Activated T-helper 1 cell treated with anti-CD3 and anti-CD28 coated beads, Interleukin-12 subunit alpha, Interleukin-12 subunit beta, Interleukin-2, Interleukin-4 antibody, amounts not matched to agents 30 ng/mL and 10 ng/mL and 1 ng/mL, durations not matched to agents 14 hours and 24 hours and 36 hours (primary cell): ENCODE measurements at regions of chr2 and their contacts with region 1.

Region 1: DNA sequence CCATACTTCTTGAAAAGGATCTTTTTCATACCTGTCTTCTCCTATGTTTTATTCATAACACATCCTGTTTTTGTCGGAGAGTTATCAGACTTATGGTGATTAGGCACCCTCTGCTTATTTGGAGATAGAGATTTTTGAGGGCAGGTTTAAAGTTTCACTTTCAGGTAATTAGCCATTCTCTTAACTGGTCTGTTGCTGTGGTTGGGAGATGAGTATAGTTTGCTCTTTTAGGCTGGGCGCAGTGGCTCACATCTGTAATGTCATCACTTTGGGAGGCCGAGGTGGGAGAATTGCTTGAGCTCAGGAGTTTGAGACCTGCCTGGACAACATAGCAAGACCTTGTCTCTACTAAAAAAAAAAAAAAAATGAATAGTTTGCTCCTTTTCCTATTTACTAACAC is 25.3 kb downstream of the SFTPB start:
- DNase-seq: no peak
- H3K4me3 Mint-ChIP-seq: no peak overlapping the region
- H3K27ac Mint-ChIP-seq: no peak overlapping the region
- H3K4me1 Mint-ChIP-seq: peaks cover 22% of the 10 kb centered on the region
- H3K27me3 Mint-ChIP-seq: no peaks in the 10 kb centered on the region

Region 2: GRCh38 chr2:85611705-85612587 is 30.8 kb before region 1 on chr2 and contains the start of gene C2orf68:
- intact Hi-C with region 1: loop called (anchors 1 kb)
- DNase-seq: peak; percentile 86
- H3K4me3 Mint-ChIP-seq: peak within 1 kb of the TSS; percentile 98
- H3K27ac Mint-ChIP-seq: peak within 1 kb of the TSS; percentile 89
- H3K4me1 Mint-ChIP-seq: peaks cover 12% of the 10 kb centered on the region
- H3K27me3 Mint-ChIP-seq: no peaks in the 10 kb centered on the region
- total RNA-seq, gene C2orf68: 36.3 and 36.7 TPM in 2 replicates

Region 3: GRCh38 chr2:85707304-85707703 is 64.6 kb after region 1 on chr2:
- intact Hi-C with region 1: loop called (anchors 1 kb)
- DNase-seq: peak; percentile 76
- H3K4me3 Mint-ChIP-seq: peak overlapping the region; percentile 50
- H3K27ac Mint-ChIP-seq: peak overlapping the region; percentile 94
- H3K4me1 Mint-ChIP-seq: peaks cover 79% of the 10 kb centered on the region
- H3K27me3 Mint-ChIP-seq: no peaks in the 10 kb centered on the region

Region 4: DNA sequence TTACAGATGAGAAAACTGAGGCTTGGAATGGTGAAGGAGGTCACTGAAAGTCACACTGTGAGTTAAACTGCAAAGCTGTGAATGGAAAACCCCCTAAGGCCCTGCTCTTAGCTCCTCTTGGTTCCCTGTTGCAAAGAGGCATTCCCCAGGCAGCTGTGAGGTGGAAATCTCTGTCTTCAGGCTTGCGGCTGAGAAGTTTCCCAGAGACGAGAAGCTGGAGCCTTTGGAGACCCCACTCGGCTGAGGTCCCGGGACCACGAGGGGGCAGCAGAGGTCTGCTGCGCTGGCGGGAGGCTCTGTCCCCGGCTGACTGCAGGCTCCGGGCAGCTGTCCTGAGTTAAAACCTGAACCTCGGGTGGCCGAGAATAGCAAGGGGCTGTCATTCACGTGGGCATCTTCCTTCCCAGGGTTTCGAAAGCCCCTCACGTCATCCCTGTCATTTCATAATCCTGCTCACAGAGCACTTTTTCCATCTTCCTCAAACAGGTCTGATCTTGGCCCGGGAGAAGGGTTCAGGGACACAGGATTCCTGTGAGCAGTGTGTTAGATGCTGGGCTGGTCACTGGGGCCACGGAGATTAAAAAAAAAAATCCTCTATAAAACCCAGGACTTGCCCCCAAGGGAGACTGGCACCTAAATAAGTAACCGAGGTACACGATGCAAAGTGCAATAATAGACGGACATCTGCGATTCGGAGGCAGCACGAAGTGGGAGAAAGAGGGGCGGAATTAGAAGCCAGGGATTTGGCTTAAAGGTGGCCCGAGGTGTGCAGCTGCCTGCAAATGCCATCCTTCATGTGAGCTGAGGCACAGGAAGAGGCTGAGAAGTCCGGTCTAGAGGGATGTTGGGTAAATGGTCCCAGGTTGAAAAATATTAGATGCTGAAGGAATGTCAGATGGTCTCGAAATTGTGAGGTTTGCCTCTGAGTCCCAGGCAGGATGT is 86.4 kb after region 1 on chr2:
- intact Hi-C with region 1: loop called (anchors 1 kb)
- DNase-seq: peak; percentile 65
- H3K4me3 Mint-ChIP-seq: no peak overlapping the region
- H3K27ac Mint-ChIP-seq: no peak overlapping the region
- H3K4me1 Mint-ChIP-seq: peaks cover 13% of the 10 kb centered on the region
- H3K27me3 Mint-ChIP-seq: peaks cover 17% of the 10 kb centered on the region

Region 5: DNA sequence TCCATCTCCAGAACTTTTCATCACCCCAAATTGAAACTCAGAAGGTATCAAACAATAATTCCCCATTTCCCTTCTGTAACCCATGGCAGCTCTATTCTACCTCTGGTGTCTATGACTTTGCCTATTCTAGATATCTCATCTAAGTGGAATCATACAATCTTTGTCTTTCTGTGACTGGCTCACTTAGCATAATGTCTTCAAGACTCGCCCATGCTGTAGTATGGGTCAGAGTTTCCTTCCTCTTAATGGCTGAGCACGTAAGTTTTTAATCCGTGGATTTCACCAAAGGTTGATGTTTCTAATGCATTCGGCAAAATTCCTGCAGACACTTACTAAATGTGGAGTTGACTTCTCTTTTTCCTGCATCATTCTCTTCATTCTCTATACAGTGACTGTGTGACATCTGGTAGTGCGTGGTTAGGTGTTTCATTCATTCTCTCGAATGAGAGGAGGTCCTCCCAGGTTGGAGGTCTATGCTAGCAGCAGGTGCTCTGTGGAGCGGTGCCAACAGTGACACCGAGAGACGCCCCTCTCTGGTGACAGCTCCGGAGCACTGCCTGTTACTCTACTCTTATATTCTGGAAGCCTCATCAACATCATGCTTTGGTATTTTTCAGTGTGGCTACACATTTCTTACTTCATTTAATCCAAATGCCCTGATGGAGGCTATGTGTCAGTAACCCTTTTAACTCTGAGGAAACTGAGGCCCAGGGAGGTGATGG is 161.1 kb after region 1 on chr2:
- intact Hi-C with region 1: no loop called
- DNase-seq: no peak
- H3K4me3 Mint-ChIP-seq: no peak overlapping the region
- H3K27ac Mint-ChIP-seq: no peak overlapping the region
- H3K4me1 Mint-ChIP-seq: peaks cover 13% of the 10 kb centered on the region
- H3K27me3 Mint-ChIP-seq: peaks cover 10% of the 10 kb centered on the region

Region 6: GRCh38 chr2:85813982-85814801 is 171.5 kb after region 1 on chr2:
- intact Hi-C with region 1: loop called (anchors 1 kb)
- DNase-seq: peak; percentile 74
- H3K4me3 Mint-ChIP-seq: no peak overlapping the region
- H3K27ac Mint-ChIP-seq: no peak overlapping the region
- H3K4me1 Mint-ChIP-seq: peaks cover 8% of the 10 kb centered on the region
- H3K27me3 Mint-ChIP-seq: peaks cover 35% of the 10 kb centered on the region